Thyroid gland (tissue), 4 donors: ENCODE measurements at regions of chr11 and their contacts with region 1.

Region 1: DNA sequence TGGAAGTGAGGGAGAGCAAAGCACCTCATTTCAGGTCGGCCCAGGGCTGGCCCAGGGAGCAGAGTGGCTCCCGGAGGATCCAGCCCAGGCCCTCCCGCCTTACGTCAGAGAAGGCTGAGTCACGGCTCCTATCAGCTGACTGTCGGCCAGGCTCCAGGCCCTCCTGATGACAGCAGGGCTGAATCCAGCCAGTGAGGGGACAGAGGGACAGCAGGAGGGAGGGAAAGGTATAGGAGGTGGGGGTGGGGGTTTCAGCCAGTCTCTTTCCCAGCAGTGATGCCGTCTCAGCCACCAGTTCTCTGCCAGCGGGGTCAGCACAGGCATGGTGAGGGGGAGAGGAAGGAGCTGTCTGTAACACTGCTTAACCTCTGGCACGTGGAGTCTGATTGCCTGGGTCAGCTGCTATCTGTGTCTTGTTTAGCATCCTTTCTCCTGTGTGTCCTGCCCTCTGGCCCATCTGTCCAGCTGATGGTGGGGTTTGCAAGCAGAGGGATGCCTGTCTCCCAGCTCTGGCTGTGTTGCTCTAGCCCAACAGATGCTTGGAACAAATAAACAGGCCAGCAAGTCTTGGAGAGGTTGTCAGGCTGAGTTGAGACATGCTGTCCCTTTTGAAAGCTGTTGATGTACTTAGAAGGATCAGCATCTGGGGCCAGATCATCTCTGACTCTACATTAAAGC is 74.0 kb downstream of the ADAMTS15 start:
- DNase-seq: peak; percentile 90 to 92
- H3K4me3 ChIP-seq: no peak overlapping the region
- H3K27ac ChIP-seq: peak overlapping the region; percentile 61 to 89 (median 71)
- H3K4me1 ChIP-seq: peaks cover 17 to 39% of the 10 kb centered on the region in 2 donors
- H3K27me3 ChIP-seq: no peaks in the 10 kb centered on the region
- CTCF ChIP-seq: no peak
- POLR2A ChIP-seq: peak; percentile 37 to 47

Region 2: DNA sequence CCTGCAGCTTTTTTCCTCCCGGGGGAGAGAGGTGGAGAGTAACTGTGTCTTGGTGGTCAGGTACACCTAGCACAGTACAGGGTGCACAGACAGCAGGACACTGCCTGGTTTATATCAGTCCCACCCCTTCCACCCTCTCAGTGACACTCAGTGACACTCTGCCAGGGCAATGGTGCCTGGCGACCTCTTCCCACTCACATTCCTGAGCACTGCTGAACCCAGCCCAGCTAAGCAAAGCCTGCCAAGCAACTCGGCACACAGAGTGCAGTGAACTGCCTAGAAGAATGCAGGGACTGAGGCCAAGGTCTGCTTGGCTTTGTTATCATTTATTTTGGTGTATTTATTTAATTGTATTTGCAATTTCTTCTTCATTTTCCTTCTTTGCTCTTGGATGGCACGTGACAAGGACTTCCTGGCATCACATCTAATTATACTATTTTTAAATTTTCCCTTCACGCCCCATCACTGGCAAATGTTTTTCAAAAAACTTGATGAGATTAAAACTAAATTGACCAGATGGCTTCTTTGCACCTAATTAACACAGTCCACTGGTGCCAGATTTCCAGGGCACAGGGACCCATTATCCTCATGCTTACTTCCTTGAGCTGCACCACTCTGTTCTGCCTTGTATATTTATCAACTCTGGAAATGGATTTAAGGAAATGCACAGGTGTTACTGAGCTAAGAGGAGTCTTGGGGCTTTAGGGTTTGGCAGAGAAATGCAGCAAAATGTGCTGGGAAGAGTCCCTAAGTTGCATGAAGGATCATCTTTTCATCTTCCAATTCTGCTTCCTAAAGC is 131.6 kb after region 1 on chr11:
- intact Hi-C with region 1: loop called (anchors 10 kb)
- DNase-seq: peak; percentile 98
- H3K4me3 ChIP-seq: no peak overlapping the region
- H3K27ac ChIP-seq: peak overlapping the region; percentile 89 to 94 (median 91)
- H3K4me1 ChIP-seq: peaks cover 55 to 66% of the 10 kb centered on the region in 2 donors
- H3K27me3 ChIP-seq: no peaks in the 10 kb centered on the region
- CTCF ChIP-seq: no peak
- POLR2A ChIP-seq: peak in 1 of 2 donors; percentile 67

Region 3: GRCh38 chr11:130798280-130798679 is 275.9 kb after region 1 on chr11:
- intact Hi-C with region 1: no loop called
- DNase-seq: no peak
- H3K4me3 ChIP-seq: no peak overlapping the region
- H3K27ac ChIP-seq: no peak overlapping the region
- H3K4me1 ChIP-seq: peaks cover 4 to 9% of the 10 kb centered on the region in 2 donors
- H3K27me3 ChIP-seq: no peaks in the 10 kb centered on the region
- CTCF ChIP-seq: no peak
- POLR2A ChIP-seq: no peak